ENCODE measurements at regions of chr13 and their contacts with region 1.

Region 1: DNA sequence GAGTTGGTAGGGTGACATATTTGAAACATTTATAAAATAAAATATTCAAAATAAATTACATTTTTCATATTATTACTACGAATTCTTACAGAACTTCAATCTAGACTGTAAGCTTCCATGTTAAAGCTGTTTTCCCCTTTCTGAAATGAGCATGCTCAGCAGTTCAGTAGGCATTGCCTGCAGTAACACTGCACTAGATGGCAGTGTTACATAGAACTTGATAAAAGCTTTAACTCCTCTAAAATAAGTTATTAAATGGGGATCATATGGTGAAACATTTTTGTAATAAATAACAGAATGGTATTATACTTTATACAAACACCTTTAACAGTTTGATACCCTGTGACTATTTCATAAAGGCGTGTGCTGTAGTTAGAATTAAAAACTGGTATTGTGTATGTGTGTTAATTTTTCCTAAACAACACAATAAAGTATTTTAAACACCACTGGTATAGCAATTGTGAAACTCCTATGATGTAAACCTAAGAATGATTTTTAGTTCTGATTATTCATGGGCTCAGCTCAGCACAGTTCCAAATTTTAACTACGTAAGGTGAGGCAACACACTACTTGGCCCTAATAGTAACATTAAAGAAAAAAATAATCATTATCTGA is 11.6 kb upstream of the GPR18 start:
- DNase-seq: no peak
- H3K4me3 Mint-ChIP-seq: no peak overlapping the region
- H3K27ac Mint-ChIP-seq: peak overlapping the region; percentile 62
- H3K4me1 Mint-ChIP-seq: peaks cover 62% of the 10 kb centered on the region
- H3K27me3 Mint-ChIP-seq: no peaks in the 10 kb centered on the region

Region 2: DNA sequence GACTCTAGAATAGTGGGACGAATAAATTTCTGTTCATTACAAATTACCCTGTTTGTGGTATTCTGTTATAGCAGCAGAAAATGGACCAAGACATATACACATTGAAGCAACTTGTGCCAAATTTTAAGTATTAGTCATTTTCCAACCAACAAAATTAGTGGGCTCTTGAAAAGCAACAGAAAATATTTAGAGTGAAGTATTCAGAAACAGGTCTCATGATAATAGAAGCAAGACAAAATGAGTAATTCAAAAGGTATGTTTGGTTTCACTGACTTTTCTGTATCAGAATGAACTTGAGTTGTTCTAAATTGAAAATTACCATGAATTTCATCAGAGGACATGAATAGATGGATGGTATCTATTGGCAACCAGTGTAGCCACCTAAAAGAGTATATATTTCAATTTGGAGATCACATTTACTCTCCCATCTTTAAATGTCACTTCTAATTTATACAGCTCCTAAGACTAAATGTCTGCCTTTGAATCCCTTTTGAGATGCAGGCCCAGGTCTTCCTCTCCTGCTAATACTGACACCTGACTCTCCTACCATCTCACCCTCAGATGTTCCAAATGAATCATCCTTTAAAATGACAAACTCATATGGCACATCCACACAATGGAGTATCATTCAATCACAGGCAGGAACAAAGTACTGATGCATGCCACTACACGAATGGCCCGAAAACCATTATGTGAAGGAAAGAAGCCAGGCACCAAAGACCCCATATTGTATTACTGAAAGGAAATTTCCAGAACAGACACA is 251.1 kb before region 1 on chr13:
- CTCF ChIA-PET with region 1: no interaction called
- POLR2A ChIA-PET with region 1: no interaction called
- intact Hi-C with region 1: no loop called
- DNase-seq: no peak
- H3K4me3 Mint-ChIP-seq: no peak overlapping the region
- H3K27ac Mint-ChIP-seq: peak overlapping the region; percentile 78
- H3K4me1 Mint-ChIP-seq: peaks cover 64% of the 10 kb centered on the region
- H3K27me3 Mint-ChIP-seq: no peaks in the 10 kb centered on the region

Region 3: DNA sequence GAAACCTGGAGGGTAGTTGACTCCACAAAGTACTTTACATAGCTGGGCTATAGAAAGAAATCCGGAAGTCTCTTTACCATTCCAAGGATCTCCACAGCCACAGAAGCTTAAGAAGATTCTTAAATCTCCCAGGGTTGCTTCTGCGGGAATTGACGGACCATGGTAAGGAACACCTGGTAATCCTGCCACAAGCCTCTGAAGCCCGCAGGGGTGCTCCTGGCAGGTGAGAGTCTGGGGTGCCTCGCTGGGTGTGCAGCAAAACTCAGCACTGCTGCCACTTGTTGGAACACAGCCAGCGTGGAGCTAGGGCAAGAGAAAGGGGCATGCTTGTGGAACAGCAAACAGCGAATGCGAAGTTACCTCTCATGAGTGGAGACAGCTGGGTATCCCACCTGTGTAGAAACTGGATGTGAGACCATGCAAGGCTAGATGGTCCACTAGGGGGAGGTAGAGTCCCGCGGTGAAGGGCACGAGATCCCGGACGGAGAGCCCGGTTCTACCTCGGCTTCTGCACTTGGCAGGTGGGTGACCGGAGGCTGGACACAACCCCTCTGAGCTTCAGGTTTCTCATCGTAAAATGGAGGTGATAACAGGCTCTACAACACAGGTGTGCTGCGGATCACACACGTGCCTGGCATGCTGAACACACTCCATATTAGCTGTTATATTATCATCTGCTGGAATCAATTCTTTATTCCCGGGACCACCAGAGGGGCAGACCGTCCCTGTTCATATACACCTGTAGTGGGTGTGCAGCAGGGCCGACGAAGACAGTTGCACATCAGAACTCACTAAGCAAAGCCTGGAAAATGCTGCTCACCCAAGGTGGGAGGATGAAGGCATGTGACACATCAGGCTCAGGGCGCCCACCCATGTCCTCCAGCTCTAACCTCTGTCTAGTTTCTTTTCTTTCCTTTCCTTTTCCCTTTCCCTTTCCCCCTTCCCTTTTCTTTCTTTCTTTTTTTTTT is 93.1 kb before region 1 on chr13:
- CTCF ChIA-PET with region 1: interaction called, 221 read pairs
- POLR2A ChIA-PET with region 1: interaction called, 7 read pairs
- intact Hi-C with region 1: loop called (anchors 1 kb)
- DNase-seq: peak; percentile 84
- H3K4me3 Mint-ChIP-seq: peak overlapping the region; percentile 45
- H3K27ac Mint-ChIP-seq: no peak overlapping the region
- H3K4me1 Mint-ChIP-seq: peaks cover 25% of the 10 kb centered on the region
- H3K27me3 Mint-ChIP-seq: peaks cover 3% of the 10 kb centered on the region

Region 4: GRCh38 chr13:99214232-99214631 is 55.5 kb before region 1 on chr13:
- CTCF ChIA-PET with region 1: interaction called, 20 read pairs
- POLR2A ChIA-PET with region 1: no interaction called
- intact Hi-C with region 1: no loop called
- DNase-seq: peak; percentile 84
- H3K4me3 Mint-ChIP-seq: peak overlapping the region; percentile 78
- H3K27ac Mint-ChIP-seq: peak overlapping the region; percentile 78
- H3K4me1 Mint-ChIP-seq: peaks cover 78% of the 10 kb centered on the region
- H3K27me3 Mint-ChIP-seq: no peaks in the 10 kb centered on the region

Region 5: DNA sequence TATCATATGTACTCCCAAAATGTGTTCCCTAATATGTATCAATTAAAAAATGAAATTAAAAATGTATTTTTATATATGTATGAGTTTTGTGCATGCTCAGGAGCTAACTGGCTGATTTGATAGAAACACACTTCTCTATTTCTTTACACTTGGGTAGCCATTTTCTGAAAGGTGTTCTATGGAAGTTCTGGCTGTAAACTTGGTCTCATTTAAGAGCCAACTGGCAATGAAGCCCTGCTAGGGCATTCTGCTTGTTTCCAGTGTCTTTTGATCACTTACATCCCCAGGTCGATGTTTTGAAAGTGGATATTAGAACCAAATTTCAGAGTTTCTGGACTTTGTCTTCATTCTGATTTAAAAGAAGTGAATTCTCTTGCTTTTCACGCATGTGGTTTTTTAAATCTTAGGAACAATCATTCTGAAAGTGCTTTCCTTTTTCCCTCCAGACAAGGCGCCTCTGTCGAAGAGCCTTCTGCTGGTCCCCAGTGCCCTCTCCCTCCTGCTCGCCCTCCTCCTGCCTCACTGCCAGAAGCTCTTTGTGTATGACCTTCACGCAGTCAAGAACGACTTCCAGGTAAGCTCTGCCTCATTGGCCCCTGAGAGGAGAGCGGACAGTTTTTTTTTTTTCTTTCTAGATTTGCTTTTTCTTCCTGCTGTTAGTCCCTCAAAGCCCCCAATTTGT is 31.6 kb before region 1 on chr13:
- CTCF ChIA-PET with region 1: no interaction called
- POLR2A ChIA-PET with region 1: no interaction called
- intact Hi-C with region 1: no loop called
- DNase-seq: peak; percentile 61
- H3K4me3 Mint-ChIP-seq: peak overlapping the region; percentile 62
- H3K27ac Mint-ChIP-seq: peak overlapping the region; percentile 81
- H3K4me1 Mint-ChIP-seq: peaks cover 50% of the 10 kb centered on the region
- H3K27me3 Mint-ChIP-seq: no peaks in the 10 kb centered on the region

Region 6: DNA sequence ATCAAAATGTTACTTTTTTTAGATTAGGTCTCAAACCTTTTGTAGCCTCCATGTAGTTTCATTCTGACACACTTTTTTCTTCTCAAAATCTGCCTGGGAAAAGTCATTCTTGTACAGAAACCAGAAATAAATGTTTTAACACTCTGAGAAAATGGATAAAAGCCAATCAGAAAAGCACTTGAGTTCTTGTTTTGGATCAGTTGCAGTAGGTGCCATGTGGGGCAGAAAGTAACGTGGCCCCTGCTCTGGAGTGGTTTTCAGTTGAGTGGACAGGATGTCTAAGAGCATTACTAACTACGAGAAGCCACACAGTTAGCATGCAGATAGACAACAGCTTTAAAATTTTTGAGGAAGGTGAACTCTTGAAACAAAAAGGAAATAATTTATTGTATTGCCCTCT is 18.4 kb after region 1 on chr13:
- CTCF ChIA-PET with region 1: interaction called, 37 read pairs
- POLR2A ChIA-PET with region 1: interaction called, 6 read pairs
- intact Hi-C with region 1: loop called (anchors 1 kb)
- DNase-seq: peak; percentile 87
- H3K4me3 Mint-ChIP-seq: no peak overlapping the region
- H3K27ac Mint-ChIP-seq: peak overlapping the region; percentile 80
- H3K4me1 Mint-ChIP-seq: peaks cover 85% of the 10 kb centered on the region
- H3K27me3 Mint-ChIP-seq: no peaks in the 10 kb centered on the region

Region 7: DNA sequence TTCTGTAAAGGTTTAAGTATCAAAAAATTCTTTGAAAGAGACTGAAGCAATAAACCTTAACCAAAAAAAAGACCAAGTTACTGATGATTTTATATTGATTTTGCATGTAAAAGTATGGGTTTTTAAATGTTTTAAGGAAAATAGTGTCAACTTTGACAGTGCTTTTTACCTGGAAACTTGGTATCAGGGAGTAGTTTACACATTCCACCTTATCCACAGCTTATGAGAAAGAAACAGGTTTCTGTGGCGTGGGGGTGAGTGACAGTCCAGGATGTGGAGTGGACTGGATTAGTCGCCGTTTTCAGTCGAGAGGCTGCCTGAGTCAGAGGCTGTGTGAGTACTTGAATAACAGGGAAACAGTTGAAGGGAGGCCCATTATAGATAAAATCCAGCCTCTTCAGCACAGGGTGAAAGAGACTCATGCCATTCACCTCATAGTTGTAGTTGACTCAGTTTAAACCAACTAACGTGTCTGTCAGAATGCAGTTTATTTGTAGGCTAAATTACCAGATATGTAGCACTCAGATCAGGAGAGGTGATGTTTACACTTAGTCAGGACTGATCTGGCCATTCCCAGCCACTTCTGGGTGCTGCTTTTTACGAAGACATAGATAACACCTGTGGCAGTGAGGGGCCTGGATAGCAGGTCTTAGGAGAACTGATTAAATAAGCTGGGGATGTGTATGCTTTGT is 38.1 kb after region 1 on chr13:
- CTCF ChIA-PET with region 1: interaction called, 93 read pairs
- POLR2A ChIA-PET with region 1: interaction called, 4 read pairs
- intact Hi-C with region 1: loop called (anchors 1 kb)
- DNase-seq: peak; percentile 91
- H3K4me3 Mint-ChIP-seq: peak overlapping the region; percentile 93
- H3K27ac Mint-ChIP-seq: peak overlapping the region; percentile 99
- H3K4me1 Mint-ChIP-seq: peaks cover 72% of the 10 kb centered on the region
- H3K27me3 Mint-ChIP-seq: no peaks in the 10 kb centered on the region

Region 8: DNA sequence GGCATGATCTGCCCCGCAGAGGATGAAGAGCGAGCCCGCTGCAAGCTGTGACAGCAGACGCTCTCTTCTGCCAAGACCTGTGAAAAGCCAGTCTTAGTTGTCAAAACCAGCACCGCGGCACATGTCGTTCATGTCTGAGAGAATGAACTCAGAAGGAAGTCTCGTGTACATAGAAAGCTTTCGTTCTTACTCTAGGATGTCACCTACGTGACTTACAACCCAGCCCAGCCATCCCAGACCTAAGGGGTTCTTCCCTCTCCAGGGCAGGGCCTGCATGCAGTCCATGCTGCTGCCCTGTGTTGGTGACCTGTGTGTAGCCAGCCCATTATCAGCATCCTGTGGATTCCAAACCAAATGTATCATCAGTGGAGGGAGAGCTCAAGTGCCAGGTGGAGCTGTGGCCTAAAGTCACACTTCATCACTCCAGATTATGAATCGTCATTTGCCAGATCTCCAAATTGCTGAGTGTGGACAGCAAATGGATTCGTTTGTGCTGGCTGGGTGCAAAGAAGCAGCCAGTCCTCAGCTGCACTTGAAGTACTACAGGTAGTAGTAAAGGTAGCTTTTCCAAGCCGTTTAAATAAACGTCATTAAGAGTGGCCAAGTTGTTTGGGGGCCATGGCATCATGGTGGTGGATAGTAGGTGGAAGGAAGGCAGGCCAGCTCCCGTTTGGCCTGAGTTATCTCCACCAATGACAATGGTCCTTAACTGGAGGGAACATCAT is 111.3 kb after region 1 on chr13:
- CTCF ChIA-PET with region 1: interaction called, 71 read pairs
- POLR2A ChIA-PET with region 1: interaction called, 10 read pairs
- intact Hi-C with region 1: no loop called
- DNase-seq: peak; percentile 87
- H3K4me3 Mint-ChIP-seq: peak overlapping the region; percentile 36
- H3K27ac Mint-ChIP-seq: peak overlapping the region; percentile 89
- H3K4me1 Mint-ChIP-seq: peaks cover 84% of the 10 kb centered on the region
- H3K27me3 Mint-ChIP-seq: no peaks in the 10 kb centered on the region

Region 9: GRCh38 chr13:99442273-99442895 is 172.7 kb after region 1 on chr13:
- CTCF ChIA-PET with region 1: interaction called, 271 read pairs
- POLR2A ChIA-PET with region 1: interaction called, 26 read pairs
- intact Hi-C with region 1: no loop called
- DNase-seq: peak; percentile 58
- H3K4me3 Mint-ChIP-seq: no peak overlapping the region
- H3K27ac Mint-ChIP-seq: no peak overlapping the region
- H3K4me1 Mint-ChIP-seq: peaks cover 13% of the 10 kb centered on the region
- H3K27me3 Mint-ChIP-seq: peaks cover 8% of the 10 kb centered on the region